B cell (primary cell): ENCODE measurements at regions of chr17 and their contacts with region 1.

Region 1: GRCh38 chr17:43068570-43069367 is 43.7 kb downstream of the RND2 start:
- DNase-seq: no peak
- ATAC-seq: no peak
- H3K4me3 ChIP-seq: no peak overlapping the region
- H3K4me3 Mint-ChIP-seq: no peak overlapping the region
- H3K27ac ChIP-seq: no peak overlapping the region
- H3K27ac Mint-ChIP-seq: no peak overlapping the region
- H3K4me1 ChIP-seq: no peaks in the 10 kb centered on the region
- H3K4me1 Mint-ChIP-seq: no peaks in the 10 kb centered on the region
- H3K27me3 ChIP-seq: no peaks in the 10 kb centered on the region
- H3K27me3 Mint-ChIP-seq: no peaks in the 10 kb centered on the region
- CTCF ChIP-seq: no peak

Region 2: DNA sequence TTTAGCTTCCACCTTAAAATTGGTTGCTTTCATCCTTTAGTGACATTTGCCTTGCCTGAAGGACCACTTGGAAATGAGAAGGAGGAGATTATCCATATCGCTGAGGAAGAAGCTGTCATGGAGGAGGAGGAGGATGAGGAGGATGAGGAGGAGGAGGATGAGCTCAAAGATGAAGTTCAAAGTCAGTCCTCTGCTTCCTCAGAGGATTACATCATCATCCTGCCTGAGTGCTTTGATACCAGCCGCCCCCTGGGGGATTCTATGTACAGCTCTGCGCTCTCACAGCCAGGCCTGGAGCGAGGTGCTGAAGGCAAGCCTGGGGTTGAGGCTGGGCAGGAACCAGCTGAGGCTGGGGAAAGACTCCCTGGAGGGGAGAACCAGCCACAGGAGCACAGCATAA is 131.4 kb after region 1 on chr17:
- CTCF ChIA-PET with region 1: no interaction called
- POLR2A ChIA-PET with region 1: interaction called, 12 read pairs
- intact Hi-C with region 1: no loop called
- DNase-seq: no peak
- ATAC-seq: no peak
- H3K4me3 ChIP-seq: no peak overlapping the region
- H3K4me3 Mint-ChIP-seq: no peak overlapping the region
- H3K27ac ChIP-seq: no peak overlapping the region
- H3K27ac Mint-ChIP-seq: no peak overlapping the region
- H3K4me1 ChIP-seq: no peaks in the 10 kb centered on the region
- H3K4me1 Mint-ChIP-seq: no peaks in the 10 kb centered on the region
- H3K27me3 ChIP-seq: no peaks in the 10 kb centered on the region
- H3K27me3 Mint-ChIP-seq: no peaks in the 10 kb centered on the region
- CTCF ChIP-seq: no peak